A549 (cell line): ENCODE measurements at regions of chr17 and their contacts with region 1.

Region 1: GRCh38 chr17:47315451-47316266 is 8.1 kb upstream of the EFCAB13 start:
- DNase-seq: peak; percentile 78 to 84
- ATAC-seq: peak; percentile 86 to 94
- H3K4me3 ChIP-seq: no peak overlapping the region
- H3K27ac ChIP-seq: peak overlapping the region in 1 of 2 experiments; percentile 39; a peak in 2 of 6 replicates
- H3K4me1 ChIP-seq: peaks cover 16% of the 10 kb centered on the region
- CTCF ChIP-seq: peak; percentile 97
- EP300 ChIP-seq: no peak
- POLR2A ChIP-seq: no peak
- RAD21 ChIP-seq: peak; percentile 97 to 99

Region 2: GRCh38 chr17:47188876-47189731 is 126.6 kb before region 1 on chr17 and contains the start of gene CDC27:
- CTCF ChIA-PET with region 1: interaction called, 18 read pairs
- POLR2A ChIA-PET with region 1: no interaction called
- DNase-seq: peak; percentile 98
- ATAC-seq: peak; percentile 95 to 96
- H3K4me3 ChIP-seq: peak within 1 kb of the TSS; percentile 75
- H3K27ac ChIP-seq: peak within 1 kb of the TSS; percentile 84 to 90
- H3K4me1 ChIP-seq: peaks cover 33% of the 10 kb centered on the region
- CTCF ChIP-seq: no peak
- EP300 ChIP-seq: no peak
- POLR2A ChIP-seq: peak; percentile 84
- RAD21 ChIP-seq: no peak
- polyA plus RNA-seq, gene CDC27: 132 and 150 TPM in 2 replicates

Region 3: DNA sequence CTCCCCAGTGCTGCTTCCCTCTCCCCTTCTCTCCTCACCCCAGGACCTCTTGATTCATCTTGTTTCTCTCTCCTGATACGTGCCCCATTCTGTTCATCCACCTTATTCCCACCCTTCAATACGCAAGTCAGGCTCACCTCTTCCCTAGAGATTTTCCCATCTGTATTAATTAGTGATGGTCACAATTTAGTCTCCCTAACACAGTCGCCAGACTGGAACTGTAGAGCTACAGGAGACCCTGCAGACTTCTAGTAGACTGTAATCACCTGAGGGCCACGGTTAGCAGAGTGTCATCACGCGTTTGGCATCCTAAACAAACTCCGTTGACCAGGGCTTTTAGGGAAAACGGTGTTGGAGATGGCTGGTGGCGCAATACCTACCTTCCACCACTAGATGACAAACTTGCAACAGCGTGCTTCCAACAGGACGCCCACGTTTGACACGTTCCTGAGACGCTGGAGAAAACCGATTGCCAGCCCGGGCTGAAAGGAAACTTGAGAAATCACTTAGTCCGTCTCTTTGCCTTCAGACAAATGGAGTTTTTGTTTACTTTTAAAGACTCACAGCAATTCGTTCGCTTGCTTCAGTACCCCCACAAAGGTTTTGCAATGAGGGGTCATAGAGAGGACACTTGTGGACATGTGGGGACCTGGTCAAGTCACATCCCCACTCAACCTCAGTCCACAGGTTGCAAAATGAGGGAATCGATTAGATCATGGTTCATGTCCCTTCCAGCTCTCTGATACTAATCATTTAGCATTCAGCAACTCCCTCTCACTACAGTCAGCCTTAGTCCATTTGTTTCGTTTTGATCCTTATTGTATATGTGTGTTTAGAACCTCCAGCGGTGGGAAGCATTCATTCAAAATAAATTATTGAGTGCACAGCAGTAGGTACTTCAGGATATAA is 85.9 kb before region 1 on chr17:
- CTCF ChIA-PET with region 1: interaction called, 204 read pairs
- POLR2A ChIA-PET with region 1: interaction called, 5 read pairs
- DNase-seq: peak; percentile 92 to 96
- ATAC-seq: peak; percentile 94 to 95
- H3K4me3 ChIP-seq: peak overlapping the region; percentile 15; the same call in 1 of the 3 replicates
- H3K27ac ChIP-seq: peak overlapping the region; percentile 15 to 69; a peak in 3 of 6 replicates
- H3K4me1 ChIP-seq: peaks cover 18% of the 10 kb centered on the region
- CTCF ChIP-seq: peak; percentile 98
- EP300 ChIP-seq: no peak
- POLR2A ChIP-seq: no peak
- RAD21 ChIP-seq: peak; percentile 99

Region 4: DNA sequence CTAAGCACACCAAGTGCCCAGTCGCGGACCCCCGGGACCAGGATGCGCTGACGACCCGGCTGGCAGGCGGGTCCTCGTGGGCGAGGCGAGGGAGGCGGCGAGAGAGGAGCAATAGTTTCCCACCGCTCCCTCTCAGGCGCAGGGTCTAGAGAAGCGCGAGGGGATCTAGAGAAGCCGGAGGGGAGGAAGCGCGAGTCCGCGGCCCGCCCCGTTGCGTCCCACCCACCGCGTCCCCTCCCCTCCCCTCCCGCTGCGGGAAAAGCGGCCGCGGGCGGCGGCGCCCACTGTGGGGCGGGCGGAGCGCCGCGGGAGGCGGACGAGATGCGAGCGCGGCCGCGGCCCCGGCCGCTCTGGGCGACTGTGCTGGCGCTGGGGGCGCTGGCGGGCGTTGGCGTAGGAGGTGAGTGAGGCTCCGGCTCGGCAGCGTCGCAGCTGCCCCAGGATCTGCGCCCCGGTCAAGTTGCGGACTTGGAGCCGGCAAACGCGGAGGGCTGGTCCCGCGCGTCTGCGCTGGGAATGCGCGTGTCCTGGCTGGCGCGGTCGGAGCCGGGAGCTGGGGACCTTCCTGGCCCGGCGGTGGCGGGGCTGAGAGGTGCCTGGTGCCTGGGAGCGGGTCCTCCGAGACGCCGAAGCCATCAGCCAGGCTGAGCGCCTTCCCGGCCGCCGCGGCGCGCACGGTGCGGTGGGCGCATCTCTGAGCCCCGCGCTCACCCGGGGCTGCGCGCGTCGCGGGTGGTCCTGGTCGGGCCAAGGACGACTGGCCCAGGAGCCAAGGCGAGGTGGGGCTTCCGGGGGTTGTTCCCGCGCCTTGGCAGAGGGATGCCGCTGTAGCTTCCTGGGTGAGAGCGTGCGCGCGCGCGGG is 61.9 kb before region 1 on chr17 and contains the start of gene ITGB3:
- CTCF ChIA-PET with region 1: interaction called, 47 read pairs
- POLR2A ChIA-PET with region 1: no interaction called
- DNase-seq: peak; percentile 78 to 83
- ATAC-seq: peak; percentile 98 to 99
- H3K4me3 ChIP-seq: peak within 1 kb of the TSS; percentile 56
- H3K27ac ChIP-seq: peak within 1 kb of the TSS; percentile 42 to 82; a peak in 5 of 6 replicates
- H3K4me1 ChIP-seq: peaks cover 13% of the 10 kb centered on the region; the same call in 2 of the 3 replicates
- CTCF ChIP-seq: peak; percentile 63
- EP300 ChIP-seq: no peak
- POLR2A ChIP-seq: no peak
- RAD21 ChIP-seq: peak in 1 of 2 experiments; percentile 40; a peak in 3 of 5 replicates
- polyA plus RNA-seq, gene ITGB3: 0.34 and 0.90 TPM in 2 replicates

Region 5: GRCh38 chr17:47286198-47286914 is 29.3 kb before region 1 on chr17:
- CTCF ChIA-PET with region 1: interaction called, 33 read pairs
- POLR2A ChIA-PET with region 1: no interaction called
- DNase-seq: no peak
- ATAC-seq: no peak
- H3K4me3 ChIP-seq: no peak overlapping the region
- H3K27ac ChIP-seq: no peak overlapping the region
- H3K4me1 ChIP-seq: peaks cover 8% of the 10 kb centered on the region; the same call in 2 of the 3 replicates
- CTCF ChIP-seq: no peak
- EP300 ChIP-seq: no peak
- POLR2A ChIP-seq: no peak
- RAD21 ChIP-seq: no peak